ENCODE measurements at regions of chr4 and their contacts with region 1.

Region 1: DNA sequence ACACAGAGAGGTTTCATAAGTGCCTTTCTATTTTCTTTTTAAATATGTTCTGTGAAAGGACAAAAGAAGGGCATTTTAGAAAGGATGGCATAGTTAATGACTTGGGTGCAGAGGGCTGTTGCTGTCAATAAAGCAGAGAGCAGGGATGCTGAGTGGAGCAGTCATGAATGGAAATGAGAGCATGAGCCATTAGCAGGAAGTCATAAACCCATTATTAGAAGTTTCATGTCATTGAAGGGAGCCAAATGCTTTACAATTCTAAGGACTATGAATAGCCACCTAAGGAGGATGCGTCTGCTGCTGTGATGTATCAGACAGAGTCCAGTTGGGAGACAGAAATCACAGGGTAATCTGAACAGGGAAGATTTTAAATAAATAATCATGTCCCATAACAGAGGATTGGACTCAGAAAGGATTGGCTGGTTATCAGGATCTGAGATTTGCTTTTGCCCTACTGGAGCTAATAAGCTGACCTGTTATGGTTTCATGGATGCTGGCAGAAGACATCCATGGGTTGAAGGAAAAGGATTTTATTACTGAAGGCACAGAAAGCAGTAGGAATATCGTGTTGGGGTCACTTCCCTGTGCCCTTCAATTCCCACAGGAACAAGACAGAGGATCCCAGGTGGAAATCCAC is 47.5 kb upstream of the WDR19 start:
- DNase-seq: no peak
- H3K4me3 ChIP-seq: no peak overlapping the region
- H3K27ac ChIP-seq: no peak overlapping the region
- H3K4me1 ChIP-seq: peaks cover 8% of the 10 kb centered on the region
- H3K27me3 ChIP-seq: no peaks in the 10 kb centered on the region
- CTCF ChIP-seq: no peak
- POLR2A ChIP-seq: no peak

Region 2: GRCh38 chr4:38082424-38083385 is 1052.1 kb before region 1 on chr4:
- intact Hi-C with region 1: no loop called
- DNase-seq: no peak
- H3K4me3 ChIP-seq: no peak overlapping the region
- H3K27ac ChIP-seq: no peak overlapping the region
- H3K4me1 ChIP-seq: peaks cover 33% of the 10 kb centered on the region
- H3K27me3 ChIP-seq: no peaks in the 10 kb centered on the region
- CTCF ChIP-seq: no peak
- POLR2A ChIP-seq: no peak

Region 3: GRCh38 chr4:38902695-38903094 is 232.1 kb before region 1 on chr4:
- intact Hi-C with region 1: loop called (anchors 5 kb)
- DNase-seq: no peak
- H3K4me3 ChIP-seq: no peak overlapping the region
- H3K27ac ChIP-seq: no peak overlapping the region
- H3K4me1 ChIP-seq: no peaks in the 10 kb centered on the region
- H3K27me3 ChIP-seq: no peaks in the 10 kb centered on the region
- CTCF ChIP-seq: no peak
- POLR2A ChIP-seq: no peak

Measured in vagina (tissue), 2 donors.